CD4-positive, alpha-beta T cell (primary cell): ENCODE measurements at regions of chr5 and their contacts with region 1.

Region 1: DNA sequence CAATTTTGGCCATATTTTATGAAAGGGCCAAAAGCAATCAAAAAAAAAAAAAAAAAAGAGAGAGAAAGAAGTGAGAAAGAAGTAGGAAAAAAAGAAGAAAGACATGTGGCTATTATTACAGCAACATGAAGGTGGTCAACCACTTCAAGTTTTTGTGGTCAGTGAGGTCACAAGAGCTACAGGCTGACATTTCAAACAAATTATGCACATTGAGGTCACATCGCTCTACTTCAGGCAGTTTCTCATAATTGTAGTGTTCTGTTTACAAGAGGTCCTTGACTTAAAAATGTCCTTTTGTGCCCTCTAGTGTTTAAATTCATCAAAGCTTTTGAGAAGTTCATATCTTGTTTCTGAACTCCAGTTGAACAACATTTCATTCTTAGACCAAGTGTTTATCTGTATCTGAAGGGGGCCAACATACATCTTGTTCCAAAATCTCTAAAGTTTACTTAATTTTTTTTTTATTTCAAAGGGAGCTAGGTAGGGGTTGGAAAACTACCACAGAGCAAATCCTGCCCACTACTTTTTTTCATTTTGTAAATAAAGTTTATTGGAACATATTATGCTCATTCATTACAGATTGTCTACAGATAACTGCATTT is 513.1 kb downstream of the PDE4D start:
- DNase-seq: peak in 3 of 14 experiments; percentile 53 to 60 (median 59)
- ATAC-seq: peak; percentile 55
- H3K4me3 ChIP-seq: no peak overlapping the region
- H3K4me3 Mint-ChIP-seq: no peak overlapping the region
- H3K27ac ChIP-seq: no peak overlapping the region
- H3K27ac Mint-ChIP-seq: no peak overlapping the region
- H3K4me1 ChIP-seq: no peaks in the 10 kb centered on the region
- H3K4me1 Mint-ChIP-seq: no peaks in the 10 kb centered on the region
- H3K27me3 ChIP-seq: no peaks in the 10 kb centered on the region
- H3K27me3 Mint-ChIP-seq: no peaks in the 10 kb centered on the region
- CTCF ChIP-seq: peak; percentile 64

Region 2: GRCh38 chr5:58871648-58872242 is 508.7 kb before region 1 on chr5:
- CTCF ChIA-PET with region 1: no interaction called
- POLR2A ChIA-PET with region 1: no interaction called
- intact Hi-C with region 1: loop called in 1 of 2 experiments (anchors 5 kb)
- DNase-seq: peak in 6 of 14 experiments; percentile 11 to 55 (median 32)
- ATAC-seq: no peak
- H3K4me3 ChIP-seq: no peak overlapping the region
- H3K4me3 Mint-ChIP-seq: no peak overlapping the region
- H3K27ac ChIP-seq: no peak overlapping the region
- H3K27ac Mint-ChIP-seq: no peak overlapping the region
- H3K4me1 ChIP-seq: no peaks in the 10 kb centered on the region
- H3K4me1 Mint-ChIP-seq: no peaks in the 10 kb centered on the region
- H3K27me3 ChIP-seq: peaks cover 0 to 4% of the 10 kb centered on the region in 2 experiments
- H3K27me3 Mint-ChIP-seq: peaks cover 19% of the 10 kb centered on the region
- CTCF ChIP-seq: peak; percentile 90

Region 3: DNA sequence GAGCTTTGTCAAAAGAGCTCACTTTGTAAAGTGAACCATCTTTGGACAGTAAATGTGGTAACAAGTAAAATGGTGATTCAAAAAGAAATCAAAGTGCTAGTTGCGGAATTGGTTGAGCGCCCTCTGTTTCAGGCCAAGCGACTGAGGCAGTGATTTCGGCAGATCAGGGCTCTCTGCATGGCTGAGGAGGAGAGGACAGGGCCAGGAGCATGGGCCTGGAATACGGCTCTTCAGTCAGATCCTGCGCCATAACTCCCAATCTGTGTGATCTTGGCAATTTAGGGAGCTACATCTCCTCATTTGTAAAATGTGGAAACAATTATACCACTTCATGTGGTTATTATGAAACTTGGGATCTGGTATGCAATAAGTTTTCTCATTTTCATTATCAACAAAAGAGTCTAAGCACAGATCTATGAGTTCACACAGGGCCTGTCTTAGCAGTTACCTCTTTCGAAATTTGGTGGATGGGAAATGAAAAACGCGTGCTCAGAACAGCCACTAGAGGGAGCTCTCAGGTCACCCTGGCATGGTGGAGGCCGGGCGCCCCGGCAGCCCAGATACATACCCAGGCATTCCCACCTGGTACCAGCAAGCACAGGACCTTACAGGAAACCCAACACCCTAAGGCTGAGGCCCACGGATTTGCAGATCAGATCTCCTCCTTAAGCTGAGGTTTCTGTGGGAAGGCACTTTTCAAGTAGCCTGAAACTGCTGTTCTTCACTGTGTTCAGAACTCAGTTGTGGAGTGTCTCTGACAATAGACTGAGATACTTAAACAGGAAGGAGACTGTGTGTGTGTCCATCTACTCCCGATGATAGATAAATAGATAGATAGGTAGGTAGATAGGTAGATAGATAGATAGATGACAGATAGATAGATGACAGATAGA is 493.9 kb before region 1 on chr5:
- CTCF ChIA-PET with region 1: interaction called, 7 read pairs
- POLR2A ChIA-PET with region 1: no interaction called
- intact Hi-C with region 1: loop called (anchors 2 kb)
- DNase-seq: peak; percentile 36 to 83 (median 52)
- ATAC-seq: peak; percentile 81
- H3K4me3 ChIP-seq: no peak overlapping the region
- H3K4me3 Mint-ChIP-seq: no peak overlapping the region
- H3K27ac ChIP-seq: no peak overlapping the region
- H3K27ac Mint-ChIP-seq: no peak overlapping the region
- H3K4me1 ChIP-seq: peaks cover 20% of the 10 kb centered on the region
- H3K4me1 Mint-ChIP-seq: peaks cover 32% of the 10 kb centered on the region
- H3K27me3 ChIP-seq: peaks cover 0 to 4% of the 10 kb centered on the region in 2 experiments
- H3K27me3 Mint-ChIP-seq: peaks cover 5% of the 10 kb centered on the region
- CTCF ChIP-seq: peak; percentile 92

Region 4: GRCh38 chr5:59188419-59189225 is 191.8 kb before region 1 on chr5:
- CTCF ChIA-PET with region 1: interaction called, 4 read pairs
- POLR2A ChIA-PET with region 1: interaction called, 4 read pairs
- intact Hi-C with region 1: loop called (anchors 1 to 2 kb)
- DNase-seq: peak; percentile 26 to 81 (median 48)
- ATAC-seq: peak; percentile 69
- H3K4me3 ChIP-seq: no peak overlapping the region
- H3K4me3 Mint-ChIP-seq: no peak overlapping the region
- H3K27ac ChIP-seq: no peak overlapping the region
- H3K27ac Mint-ChIP-seq: no peak overlapping the region
- H3K4me1 ChIP-seq: no peaks in the 10 kb centered on the region
- H3K4me1 Mint-ChIP-seq: peaks cover 5% of the 10 kb centered on the region
- H3K27me3 ChIP-seq: peaks cover 0 to 5% of the 10 kb centered on the region in 2 experiments
- H3K27me3 Mint-ChIP-seq: peaks cover 19% of the 10 kb centered on the region
- CTCF ChIP-seq: peak; percentile 95

Region 5: DNA sequence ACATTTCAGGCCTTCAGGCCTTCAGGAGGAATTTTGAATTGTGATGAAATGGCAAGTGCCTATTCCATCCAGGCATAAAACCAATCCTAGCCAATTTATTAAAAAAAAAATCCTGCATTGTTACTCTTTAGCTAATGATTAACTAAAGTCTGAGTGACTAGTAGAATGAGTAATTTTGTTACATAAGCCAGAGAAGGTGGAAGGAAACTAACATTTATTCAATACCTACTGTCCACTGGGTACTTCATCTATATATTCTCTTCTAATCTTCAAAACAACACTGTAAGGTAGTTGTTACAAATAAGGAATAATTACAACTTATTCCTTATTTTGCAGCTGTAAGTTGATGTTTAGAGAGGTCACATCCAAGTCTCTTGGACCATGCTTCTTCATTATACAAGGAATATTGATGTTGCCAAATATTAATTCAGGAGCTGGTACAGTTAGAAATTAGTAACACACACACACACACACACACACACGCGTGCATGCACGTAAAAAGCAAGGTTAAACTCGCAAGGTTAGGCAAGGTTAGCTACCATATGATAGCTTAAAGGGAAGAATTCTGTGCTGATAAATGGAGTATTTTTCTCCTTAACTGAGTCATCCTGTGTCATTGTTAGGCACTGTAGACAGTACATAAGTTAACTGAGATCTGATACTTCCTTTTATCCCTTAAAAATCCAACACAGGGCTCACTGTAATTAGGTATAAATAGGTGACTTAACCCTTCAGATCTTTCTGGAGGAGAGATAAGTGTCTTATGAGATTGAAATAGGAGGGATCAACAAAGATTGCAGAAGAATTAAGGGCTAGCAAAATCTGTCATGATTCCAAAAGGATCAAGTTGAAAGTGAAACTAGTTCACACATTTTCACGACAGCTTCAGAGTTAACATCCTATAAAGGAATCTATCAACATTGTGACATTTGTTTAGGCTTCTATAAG is 83.9 kb before region 1 on chr5:
- CTCF ChIA-PET with region 1: no interaction called
- POLR2A ChIA-PET with region 1: no interaction called
- intact Hi-C with region 1: no loop called
- DNase-seq: peak in 2 of 14 experiments; percentile 2 to 7
- ATAC-seq: no peak
- H3K4me3 ChIP-seq: peak overlapping the region; percentile 16
- H3K4me3 Mint-ChIP-seq: peak overlapping the region; percentile 72
- H3K27ac ChIP-seq: no peak overlapping the region
- H3K27ac Mint-ChIP-seq: no peak overlapping the region
- H3K4me1 ChIP-seq: no peaks in the 10 kb centered on the region
- H3K4me1 Mint-ChIP-seq: peaks cover 21% of the 10 kb centered on the region
- H3K27me3 ChIP-seq: no peaks in the 10 kb centered on the region
- H3K27me3 Mint-ChIP-seq: no peaks in the 10 kb centered on the region
- CTCF ChIP-seq: no peak

Region 6: DNA sequence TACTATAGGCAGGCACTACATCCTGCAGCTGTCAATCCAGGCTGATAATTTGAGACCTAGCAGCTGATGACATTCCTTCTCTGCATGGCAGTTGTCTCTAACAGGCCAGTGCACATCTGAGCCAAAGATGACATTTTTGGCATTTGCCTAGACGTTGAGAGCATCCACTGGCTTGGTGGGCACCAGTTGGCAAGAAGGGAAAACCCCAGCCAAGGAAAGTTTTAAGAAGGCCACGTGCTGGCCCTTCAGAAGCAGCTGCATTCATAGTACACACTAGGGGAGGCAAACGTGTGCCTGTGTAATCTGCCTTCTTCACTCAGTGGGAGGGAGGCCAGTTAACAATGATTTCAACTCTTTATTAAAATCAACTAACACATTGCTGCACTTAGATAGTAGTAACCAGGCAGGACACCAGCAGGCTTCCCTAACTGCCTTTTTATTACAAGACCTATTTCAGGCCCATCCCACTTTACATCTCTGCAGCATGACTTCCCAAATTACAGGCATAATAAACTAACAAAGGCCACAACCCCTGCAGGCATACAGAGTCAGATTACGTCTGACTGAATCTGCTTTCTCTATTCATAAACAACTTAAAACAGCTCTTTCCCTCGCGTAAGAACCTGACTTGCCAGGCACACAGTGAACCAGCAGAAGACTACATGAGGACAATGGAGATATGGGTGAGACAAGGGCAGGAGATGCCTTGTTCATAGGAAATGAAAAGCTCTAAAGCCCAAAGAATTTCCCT is 63.3 kb before region 1 on chr5:
- CTCF ChIA-PET with region 1: no interaction called
- POLR2A ChIA-PET with region 1: no interaction called
- intact Hi-C with region 1: no loop called
- DNase-seq: no peak
- ATAC-seq: no peak
- H3K4me3 ChIP-seq: no peak overlapping the region
- H3K4me3 Mint-ChIP-seq: no peak overlapping the region
- H3K27ac ChIP-seq: no peak overlapping the region
- H3K27ac Mint-ChIP-seq: no peak overlapping the region
- H3K4me1 ChIP-seq: no peaks in the 10 kb centered on the region
- H3K4me1 Mint-ChIP-seq: no peaks in the 10 kb centered on the region
- H3K27me3 ChIP-seq: peaks cover 0 to 3% of the 10 kb centered on the region in 2 experiments
- H3K27me3 Mint-ChIP-seq: peaks cover 1% of the 10 kb centered on the region
- CTCF ChIP-seq: no peak

Region 7: DNA sequence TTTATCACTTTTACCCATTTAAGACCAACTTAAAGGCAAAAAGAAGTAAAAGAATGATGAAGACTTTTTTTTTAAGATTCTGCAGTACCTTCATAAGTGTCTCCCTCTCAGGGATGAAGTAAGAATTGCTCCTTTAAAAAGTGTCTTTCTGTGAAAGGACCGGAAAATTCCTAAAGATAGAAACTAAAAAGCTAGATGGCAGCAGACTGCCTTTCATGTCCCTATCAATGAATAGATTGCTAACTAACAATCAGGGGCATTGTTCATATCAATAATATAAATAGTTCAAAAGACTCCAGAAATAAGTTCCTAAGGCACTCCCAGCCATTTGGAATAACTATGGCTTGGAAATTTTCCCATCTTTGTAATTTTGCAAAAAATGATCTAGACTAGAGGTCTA is 44.9 kb before region 1 on chr5:
- CTCF ChIA-PET with region 1: no interaction called
- POLR2A ChIA-PET with region 1: no interaction called
- intact Hi-C with region 1: no loop called
- DNase-seq: no peak
- ATAC-seq: no peak
- H3K4me3 ChIP-seq: no peak overlapping the region
- H3K4me3 Mint-ChIP-seq: no peak overlapping the region
- H3K27ac ChIP-seq: no peak overlapping the region
- H3K27ac Mint-ChIP-seq: no peak overlapping the region
- H3K4me1 ChIP-seq: no peaks in the 10 kb centered on the region
- H3K4me1 Mint-ChIP-seq: no peaks in the 10 kb centered on the region
- H3K27me3 ChIP-seq: peaks cover 3 to 4% of the 10 kb centered on the region in 2 experiments
- H3K27me3 Mint-ChIP-seq: peaks cover 29% of the 10 kb centered on the region
- CTCF ChIP-seq: no peak

Region 8: DNA sequence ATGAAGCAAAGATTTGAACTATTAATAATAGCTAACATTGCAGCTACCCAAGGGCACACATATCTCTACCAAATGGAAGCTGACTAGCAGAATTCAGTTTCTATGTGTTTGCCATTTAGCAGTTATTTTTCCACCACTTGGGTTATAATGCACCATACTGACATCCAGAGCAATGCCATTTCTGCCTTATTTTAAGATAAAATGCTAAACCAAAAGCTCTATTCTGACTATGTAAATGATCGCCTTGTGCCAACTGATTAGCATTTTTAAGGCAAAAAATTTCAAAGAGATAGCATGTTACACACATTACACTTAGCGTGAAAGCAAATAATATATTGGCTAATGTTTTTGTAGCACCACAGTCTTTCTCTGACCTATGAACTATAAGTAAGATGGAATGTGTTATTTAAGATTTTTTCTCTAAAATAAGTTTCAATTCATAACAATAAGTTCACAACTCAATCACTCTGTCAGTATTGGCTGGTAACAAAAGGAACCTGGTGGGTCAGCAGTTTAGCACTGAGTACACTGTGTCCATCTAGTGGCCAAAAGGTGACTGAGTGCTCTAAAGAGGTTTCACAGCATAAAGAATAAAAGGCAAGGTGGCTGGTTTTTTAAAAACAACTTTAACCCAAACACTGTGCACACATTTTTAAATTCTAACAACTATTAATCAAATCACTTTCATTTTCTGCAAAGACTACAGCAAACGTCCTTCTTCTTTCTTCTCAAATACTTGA is 69.6 kb after region 1 on chr5:
- CTCF ChIA-PET with region 1: no interaction called
- POLR2A ChIA-PET with region 1: no interaction called
- intact Hi-C with region 1: no loop called
- DNase-seq: no peak
- ATAC-seq: no peak
- H3K4me3 ChIP-seq: no peak overlapping the region
- H3K4me3 Mint-ChIP-seq: no peak overlapping the region
- H3K27ac ChIP-seq: no peak overlapping the region
- H3K27ac Mint-ChIP-seq: no peak overlapping the region
- H3K4me1 ChIP-seq: no peaks in the 10 kb centered on the region
- H3K4me1 Mint-ChIP-seq: no peaks in the 10 kb centered on the region
- H3K27me3 ChIP-seq: no peaks in the 10 kb centered on the region
- H3K27me3 Mint-ChIP-seq: no peaks in the 10 kb centered on the region
- CTCF ChIP-seq: no peak

Region 9: GRCh38 chr5:59673438-59674058 is 293.1 kb after region 1 on chr5:
- CTCF ChIA-PET with region 1: no interaction called
- POLR2A ChIA-PET with region 1: no interaction called
- intact Hi-C with region 1: loop called in 1 of 2 experiments (anchors 10 kb)
- DNase-seq: peak in 3 of 14 experiments; percentile 34 to 59 (median 46)
- ATAC-seq: no peak
- H3K4me3 ChIP-seq: no peak overlapping the region
- H3K4me3 Mint-ChIP-seq: no peak overlapping the region
- H3K27ac ChIP-seq: no peak overlapping the region
- H3K27ac Mint-ChIP-seq: no peak overlapping the region
- H3K4me1 ChIP-seq: no peaks in the 10 kb centered on the region
- H3K4me1 Mint-ChIP-seq: no peaks in the 10 kb centered on the region
- H3K27me3 ChIP-seq: no peaks in the 10 kb centered on the region
- H3K27me3 Mint-ChIP-seq: peaks cover under 1% of the 10 kb centered on the region
- CTCF ChIP-seq: peak; percentile 97